Right lobe of liver (tissue), 6 donors: ENCODE measurements at regions of chr19 and their contacts with region 1.

Region 1: GRCh38 chr19:55146078-55146704 is 2.8 kb downstream of the TNNT1 start:
- DNase-seq: no peak
- ATAC-seq: no peak
- H3K4me3 ChIP-seq: no peak overlapping the region
- H3K27ac ChIP-seq: no peak overlapping the region
- H3K4me1 ChIP-seq: peaks cover 0 to 3% (median 0%) of the 10 kb centered on the region in 4 donors
- H3K27me3 ChIP-seq: peaks cover 0 to 6% of the 10 kb centered on the region in 2 donors
- CTCF ChIP-seq: peak in 3 of 4 donors; percentile 15 to 25 (median 17)
- POLR2A ChIP-seq: no peak

Region 2: GRCh38 chr19:55385740-55386529 is 239.7 kb after region 1 on chr19 and contains the start of gene RPL28:
- intact Hi-C with region 1: no loop called
- DNase-seq: peak; percentile 97 to 98 (median 98)
- ATAC-seq: peak; percentile 85 to 88 (median 86)
- H3K4me3 ChIP-seq: peak within 1 kb of the TSS; percentile 89 to 96 (median 89)
- H3K27ac ChIP-seq: peak within 1 kb of the TSS; percentile 89 to 92 (median 90)
- H3K4me1 ChIP-seq: peaks cover 0 to 34% (median 15%) of the 10 kb centered on the region in 4 donors
- H3K27me3 ChIP-seq: no peaks in the 10 kb centered on the region
- CTCF ChIP-seq: no peak
- POLR2A ChIP-seq: peak; percentile 98
- total RNA-seq, gene RPL28: 305 to 530 (median 455) TPM

Region 3: DNA sequence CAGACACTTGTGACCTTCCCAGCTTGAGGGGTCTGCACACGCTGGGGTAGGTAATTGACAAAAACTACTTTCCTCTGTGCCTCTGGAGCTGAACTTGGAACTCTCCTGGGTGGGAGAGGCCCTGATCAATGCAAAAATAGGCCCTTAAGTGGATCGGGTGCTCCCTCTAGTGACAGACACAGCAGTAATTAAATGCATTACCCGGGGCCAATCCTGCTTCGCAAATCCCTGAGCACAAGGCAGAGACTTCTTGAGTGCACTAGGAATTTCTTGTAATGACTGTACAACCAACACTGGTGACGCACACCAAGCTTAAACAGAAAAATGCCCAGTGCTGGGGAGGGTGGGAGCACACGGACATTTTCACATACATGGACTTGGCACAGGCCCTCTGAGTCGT is 272.0 kb after region 1 on chr19:
- intact Hi-C with region 1: loop called (anchors 10 kb)
- DNase-seq: peak in 2 of 3 donors; percentile 35 to 61
- ATAC-seq: peak; percentile 90 to 98 (median 92)
- H3K4me3 ChIP-seq: no peak overlapping the region
- H3K27ac ChIP-seq: no peak overlapping the region
- H3K4me1 ChIP-seq: no peaks in the 10 kb centered on the region
- H3K27me3 ChIP-seq: no peaks in the 10 kb centered on the region
- CTCF ChIP-seq: peak; percentile 68 to 81 (median 72)
- POLR2A ChIP-seq: no peak

Region 4: GRCh38 chr19:55426042-55426441 is 279.9 kb after region 1 on chr19:
- intact Hi-C with region 1: loop called in 1 of 2 experiments (anchors 10 kb)
- DNase-seq: no peak
- ATAC-seq: no peak
- H3K4me3 ChIP-seq: no peak overlapping the region
- H3K27ac ChIP-seq: no peak overlapping the region
- H3K4me1 ChIP-seq: no peaks in the 10 kb centered on the region
- H3K27me3 ChIP-seq: no peaks in the 10 kb centered on the region
- CTCF ChIP-seq: no peak
- POLR2A ChIP-seq: no peak

Region 5: GRCh38 chr19:55494172-55494761 is 348.1 kb after region 1 on chr19:
- intact Hi-C with region 1: loop called in 1 of 2 experiments (anchors 10 kb)
- DNase-seq: no peak
- ATAC-seq: peak; percentile 17 to 69 (median 32)
- H3K4me3 ChIP-seq: peak overlapping the region; percentile 12 to 19 (median 16)
- H3K27ac ChIP-seq: peak overlapping the region in 1 of 3 donors; percentile 43
- H3K4me1 ChIP-seq: no peaks in the 10 kb centered on the region
- H3K27me3 ChIP-seq: no peaks in the 10 kb centered on the region
- CTCF ChIP-seq: no peak
- POLR2A ChIP-seq: no peak